Activated naive CD4-positive, alpha-beta T cell treated with anti-CD3 and anti-CD28 coated beads for 36 hours (primary cell): ENCODE measurements at regions of chr19 and their contacts with region 1.

Region 1: GRCh38 chr19:13012690-13013608 is 17.7 kb downstream of the NFIX start:
- DNase-seq: peak; percentile 83
- H3K4me3 Mint-ChIP-seq: peak overlapping the region; percentile 73
- H3K27ac Mint-ChIP-seq: peak overlapping the region; percentile 83
- H3K4me1 Mint-ChIP-seq: peaks cover 22% of the 10 kb centered on the region
- H3K27me3 Mint-ChIP-seq: peaks cover 40% of the 10 kb centered on the region

Region 2: DNA sequence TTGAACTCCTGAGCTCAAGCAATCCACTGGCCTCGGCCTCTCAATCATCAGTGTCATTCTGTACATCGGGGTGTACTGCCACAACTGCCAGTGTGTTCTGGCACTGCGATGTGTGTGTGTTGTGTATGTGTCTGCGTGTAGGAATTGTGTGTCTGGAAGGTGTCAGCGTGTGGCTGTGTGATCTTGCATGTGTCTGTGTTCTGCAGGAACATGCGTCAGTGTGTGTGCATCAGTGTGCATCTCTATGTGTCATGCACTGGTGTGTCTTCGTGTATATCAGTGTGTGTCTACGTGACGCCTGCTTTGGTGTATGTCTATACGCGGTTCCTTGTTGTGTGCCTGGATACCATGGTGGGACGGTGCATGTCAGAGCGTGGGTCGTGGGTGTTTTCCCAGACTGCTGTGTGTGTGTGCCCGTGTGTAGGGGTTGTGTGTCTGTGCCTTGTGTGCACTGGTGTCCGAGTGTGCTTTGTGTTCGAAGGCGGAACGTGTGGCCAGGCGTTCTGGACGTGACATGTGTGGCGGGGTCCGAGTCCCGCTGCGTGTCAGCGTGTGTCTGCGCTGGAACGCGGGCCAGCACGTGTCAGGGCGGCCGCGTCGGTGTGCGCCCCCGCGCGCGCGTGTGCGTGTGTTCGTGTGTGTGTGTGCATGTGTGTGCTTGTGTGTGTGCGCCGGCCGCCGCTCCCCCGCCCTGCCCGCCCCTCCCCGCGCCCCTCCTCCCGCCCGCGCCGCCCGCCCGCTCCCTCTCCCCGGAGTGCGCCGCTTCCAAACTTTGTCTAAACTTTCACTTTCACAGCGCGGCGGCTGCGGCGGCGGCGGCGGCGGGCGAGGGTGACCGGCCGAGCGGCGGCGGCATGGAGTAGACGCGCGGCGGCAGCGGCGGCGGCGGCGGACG is 18.0 kb before region 1 on chr19 and contains the start of gene NFIX:
- CTCF ChIA-PET with region 1: interaction called, 6 read pairs
- intact Hi-C with region 1: loop called (anchors 2 kb)
- DNase-seq: peak; percentile 70
- H3K4me3 Mint-ChIP-seq: peak within 1 kb of the TSS; percentile 86
- H3K27ac Mint-ChIP-seq: no peak within 1 kb of the TSS
- H3K4me1 Mint-ChIP-seq: peaks cover 9% of the 10 kb centered on the region
- H3K27me3 Mint-ChIP-seq: no peaks in the 10 kb centered on the region
- total RNA-seq, gene NFIX: 6.2 to 6.4 TPM

Region 3: DNA sequence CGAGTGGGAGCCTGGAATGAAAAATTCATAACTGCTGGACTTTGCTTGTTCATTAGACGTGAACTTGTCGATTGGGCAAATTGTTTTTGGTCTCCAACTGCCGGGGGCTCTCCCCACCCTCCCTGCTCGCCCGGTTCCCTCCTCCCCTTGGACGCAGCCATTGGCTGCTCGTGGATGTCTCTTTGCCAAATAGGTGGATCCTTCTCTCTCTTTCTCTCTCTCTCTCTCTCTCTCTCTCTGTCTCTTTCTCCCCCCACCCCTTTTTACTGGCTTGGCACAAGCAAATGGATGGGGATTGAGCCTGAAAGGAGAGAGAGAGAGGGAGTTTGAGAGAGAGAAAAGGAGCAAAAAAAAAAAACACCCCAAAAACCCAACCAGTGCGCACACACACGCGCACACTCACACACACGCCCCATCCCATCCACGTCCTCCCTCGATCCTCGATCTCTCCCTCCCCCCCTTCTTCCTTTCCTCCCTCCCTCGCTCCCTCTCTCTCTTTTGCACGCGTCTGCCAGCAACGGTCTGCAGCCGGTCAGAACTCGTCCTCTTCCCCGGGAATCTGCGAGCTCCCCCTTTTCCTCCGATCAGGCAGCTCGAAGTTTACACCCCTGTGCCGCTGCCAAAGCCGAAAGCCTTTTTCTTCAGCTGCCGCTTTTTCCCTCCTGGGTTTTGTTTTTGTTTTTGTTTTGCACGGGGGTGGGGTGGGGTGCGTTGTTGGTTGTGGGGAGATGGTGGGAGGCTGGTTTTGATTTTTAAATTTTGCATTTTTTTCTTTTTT is 10.1 kb after region 1 on chr19:
- CTCF ChIA-PET with region 1: interaction called, 3 read pairs
- intact Hi-C with region 1: loop called (anchors 1 kb)
- DNase-seq: peak; percentile 44
- H3K4me3 Mint-ChIP-seq: peak overlapping the region; percentile 70
- H3K27ac Mint-ChIP-seq: no peak overlapping the region
- H3K4me1 Mint-ChIP-seq: peaks cover 22% of the 10 kb centered on the region
- H3K27me3 Mint-ChIP-seq: peaks cover 7% of the 10 kb centered on the region

Region 4: DNA sequence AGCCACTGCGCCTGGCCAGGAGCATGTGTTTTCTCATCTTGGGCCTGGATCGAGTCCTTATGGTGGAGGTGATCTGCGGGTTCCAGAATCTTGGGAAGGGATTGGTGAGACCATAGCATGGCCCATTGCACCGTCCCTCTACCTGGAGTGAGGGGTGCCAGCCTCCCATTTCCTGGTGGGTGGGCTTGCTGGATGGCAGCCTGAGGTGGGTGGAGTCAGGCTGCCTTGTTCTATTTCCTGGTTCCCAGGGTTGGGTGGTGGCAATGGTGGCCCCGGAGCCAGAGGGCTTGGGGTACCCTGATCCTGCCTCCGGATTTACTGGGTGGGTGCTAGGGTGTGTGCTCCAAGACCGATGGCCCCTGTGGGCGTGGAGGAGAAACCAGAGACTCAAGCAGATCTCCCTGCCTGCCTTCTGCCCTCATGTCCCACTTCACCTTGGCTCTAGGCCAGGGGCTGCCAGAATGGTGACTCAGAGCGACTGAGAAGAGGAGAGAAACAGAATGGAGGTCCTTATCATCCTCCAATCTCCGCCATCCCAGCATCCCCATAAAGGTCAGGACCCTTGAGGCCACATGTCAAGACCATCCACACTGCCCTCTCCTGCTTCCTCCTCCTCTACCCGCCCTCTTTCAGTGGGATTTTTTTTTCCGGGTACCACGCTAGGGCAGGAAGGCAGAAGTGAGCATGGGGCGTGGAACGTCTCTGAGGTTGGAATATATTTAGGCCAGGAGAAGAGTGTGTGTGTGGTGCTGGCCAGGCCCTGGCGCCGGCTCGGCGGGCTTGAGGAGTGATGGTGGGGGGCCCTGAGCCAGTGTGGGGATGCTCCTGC is 159.3 kb after region 1 on chr19:
- CTCF ChIA-PET with region 1: no interaction called
- intact Hi-C with region 1: loop called (anchors 2 kb)
- DNase-seq: peak; percentile 93
- H3K4me3 Mint-ChIP-seq: peak overlapping the region; percentile 90
- H3K27ac Mint-ChIP-seq: peak overlapping the region; percentile 99
- H3K4me1 Mint-ChIP-seq: peaks cover 61% of the 10 kb centered on the region
- H3K27me3 Mint-ChIP-seq: no peaks in the 10 kb centered on the region